ENCODE measurements at regions of chr5 and their contacts with region 1.

Region 1: GRCh38 chr5:134411546-134412266 is at the start of gene CDKN2AIPNL:
- DNase-seq: peak; percentile 91
- H3K4me3 Mint-ChIP-seq: peak within 1 kb of the TSS; percentile 96
- H3K27ac Mint-ChIP-seq: peak within 1 kb of the TSS; percentile 84
- H3K4me1 Mint-ChIP-seq: peaks cover 36% of the 10 kb centered on the region
- H3K27me3 Mint-ChIP-seq: no peaks in the 10 kb centered on the region
- total RNA-seq, gene CDKN2AIPNL: 23.4 to 23.5 TPM

Region 2: GRCh38 chr5:134304311-134304710 is 107.4 kb before region 1 on chr5:
- CTCF ChIA-PET with region 1: interaction called, 11 read pairs
- POLR2A ChIA-PET with region 1: no interaction called
- DNase-seq: no peak
- H3K4me3 Mint-ChIP-seq: no peak overlapping the region
- H3K27ac Mint-ChIP-seq: no peak overlapping the region
- H3K4me1 Mint-ChIP-seq: peaks cover 7% of the 10 kb centered on the region
- H3K27me3 Mint-ChIP-seq: peaks cover 2% of the 10 kb centered on the region

Region 3: GRCh38 chr5:134345996-134346395 is 65.7 kb before region 1 on chr5:
- CTCF ChIA-PET with region 1: no interaction called
- POLR2A ChIA-PET with region 1: no interaction called
- DNase-seq: no peak
- H3K4me3 Mint-ChIP-seq: no peak overlapping the region
- H3K27ac Mint-ChIP-seq: no peak overlapping the region
- H3K4me1 Mint-ChIP-seq: peaks cover 8% of the 10 kb centered on the region
- H3K27me3 Mint-ChIP-seq: no peaks in the 10 kb centered on the region

Region 4: DNA sequence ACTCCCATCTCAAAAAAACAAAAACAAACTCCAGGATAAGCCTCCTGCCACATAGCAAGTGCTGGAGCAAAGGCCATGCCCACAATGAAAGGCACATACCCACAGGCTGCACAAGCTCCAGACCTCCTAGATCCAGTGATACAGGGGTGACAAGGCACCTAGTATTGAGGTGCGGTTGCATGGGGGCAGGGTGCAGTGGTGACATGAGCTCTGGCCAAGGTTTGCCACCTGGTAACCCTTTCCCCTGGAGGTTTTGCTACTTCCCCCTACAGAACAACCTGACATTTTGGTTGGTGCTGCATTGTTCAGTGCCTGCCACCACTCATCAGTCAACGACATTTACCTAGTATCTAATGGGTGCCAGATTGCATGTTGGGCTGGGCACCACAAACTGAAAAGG is 14.5 kb before region 1 on chr5:
- CTCF ChIA-PET with region 1: interaction called, 8 read pairs
- POLR2A ChIA-PET with region 1: interaction called, 12 read pairs
- DNase-seq: no peak
- H3K4me3 Mint-ChIP-seq: no peak overlapping the region
- H3K27ac Mint-ChIP-seq: no peak overlapping the region
- H3K4me1 Mint-ChIP-seq: no peaks in the 10 kb centered on the region
- H3K27me3 Mint-ChIP-seq: no peaks in the 10 kb centered on the region

Region 5: GRCh38 chr5:134465816-134466240 is 54.1 kb after region 1 on chr5:
- CTCF ChIA-PET with region 1: interaction called, 4 read pairs
- POLR2A ChIA-PET with region 1: interaction called, 10 read pairs
- DNase-seq: peak; percentile 67
- H3K4me3 Mint-ChIP-seq: peak overlapping the region; percentile 72
- H3K27ac Mint-ChIP-seq: peak overlapping the region; percentile 68
- H3K4me1 Mint-ChIP-seq: peaks cover 15% of the 10 kb centered on the region
- H3K27me3 Mint-ChIP-seq: peaks cover 4% of the 10 kb centered on the region

Region 6: GRCh38 chr5:134489227-134489944 is 77.7 kb after region 1 on chr5:
- CTCF ChIA-PET with region 1: no interaction called
- POLR2A ChIA-PET with region 1: no interaction called
- DNase-seq: no peak
- H3K4me3 Mint-ChIP-seq: no peak overlapping the region
- H3K27ac Mint-ChIP-seq: no peak overlapping the region
- H3K4me1 Mint-ChIP-seq: no peaks in the 10 kb centered on the region
- H3K27me3 Mint-ChIP-seq: no peaks in the 10 kb centered on the region

Region 7: DNA sequence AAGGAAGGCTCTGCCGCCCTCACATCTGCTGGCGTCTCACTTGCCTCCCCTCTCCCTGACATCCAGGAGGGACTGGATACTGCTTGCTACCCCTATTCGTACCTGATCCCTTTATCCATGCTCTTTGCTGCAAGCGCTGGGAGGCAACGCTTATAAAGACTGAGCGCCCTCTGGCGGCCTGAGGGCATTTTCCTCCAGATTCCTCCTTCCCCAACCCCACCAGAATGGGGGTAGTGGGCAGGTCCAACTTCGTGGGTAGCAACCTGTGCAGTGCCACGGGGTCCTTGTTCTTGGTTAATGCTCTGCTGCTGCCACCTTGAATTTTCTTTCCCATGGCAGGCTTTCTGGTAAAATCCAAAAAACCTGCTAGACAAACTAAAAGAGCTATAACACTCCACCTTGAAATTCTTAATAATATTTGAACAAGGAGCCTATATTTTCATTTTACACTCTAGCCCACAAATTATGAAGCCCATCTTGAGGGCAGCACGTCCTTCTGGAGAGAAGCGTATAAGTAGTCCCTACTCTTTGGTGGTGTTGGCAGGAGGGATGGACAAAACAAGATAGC is 166.2 kb after region 1 on chr5:
- CTCF ChIA-PET with region 1: interaction called, 10 read pairs
- POLR2A ChIA-PET with region 1: interaction called, 4 read pairs
- DNase-seq: peak; percentile 78
- H3K4me3 Mint-ChIP-seq: no peak overlapping the region
- H3K27ac Mint-ChIP-seq: no peak overlapping the region
- H3K4me1 Mint-ChIP-seq: no peaks in the 10 kb centered on the region
- H3K27me3 Mint-ChIP-seq: no peaks in the 10 kb centered on the region